Psoas muscle (tissue), 8 donors: ENCODE measurements at regions of chr17 and their contacts with region 1.

Region 1: GRCh38 chr17:77096570-77097214 is 44.1 kb upstream of the SEC14L1 start:
- DNase-seq: no peak
- ATAC-seq: peak in 3 of 4 donors; percentile 13 to 57 (median 31)
- H3K4me3 ChIP-seq: peak overlapping the region; percentile 8
- H3K27ac ChIP-seq: peak overlapping the region; percentile 83
- H3K4me1 ChIP-seq: peaks cover 60% of the 10 kb centered on the region
- H3K27me3 ChIP-seq: no peaks in the 10 kb centered on the region
- CTCF ChIP-seq: peak; percentile 58

Region 2: DNA sequence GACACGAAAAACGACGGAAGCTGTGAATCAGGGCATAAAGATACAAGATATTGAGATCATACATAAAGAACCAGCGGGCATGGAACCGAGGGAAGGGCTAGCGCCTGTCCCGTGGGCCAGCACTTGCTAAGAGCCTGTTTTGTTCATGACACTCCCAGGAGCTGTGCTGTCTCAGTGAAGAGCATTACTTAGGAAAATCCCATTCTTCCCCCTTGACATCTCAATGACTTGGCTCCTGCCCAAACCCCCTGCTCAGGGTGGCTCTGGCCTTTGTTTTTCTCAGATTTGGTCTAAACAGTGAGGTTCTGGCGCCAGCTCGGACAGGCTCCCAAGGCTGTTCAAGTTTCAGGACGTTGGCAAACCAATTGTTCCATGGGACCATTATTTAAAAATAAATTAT is 35.0 kb before region 1 on chr17:
- intact Hi-C with region 1: no loop called
- DNase-seq: no peak
- ATAC-seq: no peak
- H3K4me3 ChIP-seq: no peak overlapping the region
- H3K27ac ChIP-seq: no peak overlapping the region
- H3K4me1 ChIP-seq: no peaks in the 10 kb centered on the region
- H3K27me3 ChIP-seq: peaks cover 0 to 21% (median 0%) of the 10 kb centered on the region in 3 donors
- CTCF ChIP-seq: no peak

Region 3: GRCh38 chr17:77131904-77132303 is 35.2 kb after region 1 on chr17:
- intact Hi-C with region 1: loop called (anchors 5 kb)
- DNase-seq: no peak
- ATAC-seq: no peak
- H3K4me3 ChIP-seq: peak overlapping the region; percentile 5
- H3K27ac ChIP-seq: peak overlapping the region; percentile 72
- H3K4me1 ChIP-seq: peaks cover 30% of the 10 kb centered on the region
- H3K27me3 ChIP-seq: no peaks in the 10 kb centered on the region
- CTCF ChIP-seq: no peak

Region 4: DNA sequence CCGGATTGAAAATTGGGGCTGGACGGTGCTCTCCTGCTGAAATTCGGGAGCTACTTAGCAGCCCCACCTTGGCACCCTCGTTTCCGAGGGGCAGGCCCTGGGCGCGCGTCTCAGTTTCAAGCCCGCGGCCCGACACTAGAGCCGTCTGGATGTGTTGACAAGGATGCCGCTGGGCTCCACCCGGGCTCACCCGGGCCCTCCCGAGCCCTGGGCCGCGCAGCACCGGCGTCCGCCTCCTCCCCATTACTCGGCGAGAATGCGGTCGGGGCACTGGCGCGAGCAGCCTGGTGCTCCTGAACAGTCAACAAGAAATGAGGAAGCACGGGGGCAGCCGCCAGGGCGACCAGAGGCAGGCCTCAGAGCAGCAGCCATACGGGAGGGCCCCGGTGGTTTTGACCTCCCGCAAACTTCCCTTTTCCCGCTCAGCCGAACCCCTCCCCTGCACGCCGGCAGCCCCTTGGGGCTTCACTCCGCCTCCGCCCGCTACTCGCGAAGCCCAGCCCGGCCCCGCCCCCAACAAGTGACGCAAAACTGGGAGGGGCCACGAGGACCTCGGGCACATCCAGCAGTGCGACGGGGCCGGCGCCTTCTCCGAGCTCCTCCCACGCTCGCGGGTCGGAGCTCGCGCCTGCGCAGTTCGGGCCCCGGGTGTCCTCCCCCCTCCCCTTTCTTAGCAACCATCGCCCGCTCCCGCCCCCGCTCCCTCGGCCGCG is 43.6 kb after region 1 on chr17:
- intact Hi-C with region 1: loop called (anchors 5 kb)
- DNase-seq: peak; percentile 99 to 100
- ATAC-seq: peak; percentile 94 to 98 (median 96)
- H3K4me3 ChIP-seq: peak overlapping the region; percentile 85
- H3K27ac ChIP-seq: peak overlapping the region; percentile 99
- H3K4me1 ChIP-seq: peaks cover 25% of the 10 kb centered on the region
- H3K27me3 ChIP-seq: no peaks in the 10 kb centered on the region
- CTCF ChIP-seq: no peak

Region 5: GRCh38 chr17:77145612-77146245 is 49.0 kb after region 1 on chr17:
- intact Hi-C with region 1: loop called in 1 of 2 experiments (anchors 5 kb)
- DNase-seq: peak; percentile 69 to 77
- ATAC-seq: peak; percentile 28 to 40 (median 36)
- H3K4me3 ChIP-seq: peak overlapping the region; percentile 54
- H3K27ac ChIP-seq: peak overlapping the region; percentile 99
- H3K4me1 ChIP-seq: peaks cover 64% of the 10 kb centered on the region
- H3K27me3 ChIP-seq: no peaks in the 10 kb centered on the region
- CTCF ChIP-seq: peak; percentile 14

Region 6: GRCh38 chr17:77214743-77215142 is 118.1 kb after region 1 on chr17:
- intact Hi-C with region 1: loop called in 1 of 2 experiments (anchors 5 kb)
- DNase-seq: peak in 1 of 2 donors; percentile 70
- ATAC-seq: peak; percentile 76 to 84 (median 83)
- H3K4me3 ChIP-seq: no peak overlapping the region
- H3K27ac ChIP-seq: no peak overlapping the region
- H3K4me1 ChIP-seq: peaks cover 23% of the 10 kb centered on the region
- H3K27me3 ChIP-seq: no peaks in the 10 kb centered on the region
- CTCF ChIP-seq: peak; percentile 53